B cell (primary cell): ENCODE measurements at regions of chr6 and their contacts with region 1.

Region 1: GRCh38 chr6:142802124-142802523 is 142.9 kb downstream of the HIVEP2 start:
- DNase-seq: no peak
- ATAC-seq: no peak
- H3K4me3 ChIP-seq: no peak overlapping the region
- H3K4me3 Mint-ChIP-seq: no peak overlapping the region
- H3K27ac ChIP-seq: peak overlapping the region in 1 of 2 donors; percentile 9
- H3K27ac Mint-ChIP-seq: no peak overlapping the region
- H3K4me1 ChIP-seq: peaks cover 11 to 16% of the 10 kb centered on the region in 2 donors
- H3K4me1 Mint-ChIP-seq: peaks cover 62% of the 10 kb centered on the region
- H3K27me3 ChIP-seq: no peaks in the 10 kb centered on the region
- H3K27me3 Mint-ChIP-seq: no peaks in the 10 kb centered on the region
- CTCF ChIP-seq: no peak

Region 2: GRCh38 chr6:142819603-142820337 is 17.6 kb after region 1 on chr6:
- CTCF ChIA-PET with region 1: interaction called, 5 read pairs
- POLR2A ChIA-PET with region 1: interaction called, 3 read pairs
- intact Hi-C with region 1: loop called (anchors 2 kb)
- DNase-seq: peak; percentile 77
- ATAC-seq: peak; percentile 68
- H3K4me3 ChIP-seq: peak overlapping the region; percentile 18 to 89 (median 52)
- H3K4me3 Mint-ChIP-seq: peak overlapping the region; percentile 92
- H3K27ac ChIP-seq: peak overlapping the region; percentile 86 to 87
- H3K27ac Mint-ChIP-seq: peak overlapping the region; percentile 96
- H3K4me1 ChIP-seq: peaks cover 42 to 47% of the 10 kb centered on the region in 2 donors
- H3K4me1 Mint-ChIP-seq: peaks cover 70% of the 10 kb centered on the region
- H3K27me3 ChIP-seq: no peaks in the 10 kb centered on the region
- H3K27me3 Mint-ChIP-seq: no peaks in the 10 kb centered on the region
- CTCF ChIP-seq: no peak